ENCODE measurements at regions of chr1 and their contacts with region 1.

Region 1: GRCh38 chr1:75203415-75204277 is 69.5 kb downstream of the LHX8 start:
- DNase-seq: no peak
- ATAC-seq: no peak
- H3K4me3 Mint-ChIP-seq: no peak overlapping the region
- H3K27ac Mint-ChIP-seq: no peak overlapping the region
- H3K4me1 Mint-ChIP-seq: no peaks in the 10 kb centered on the region
- H3K27me3 Mint-ChIP-seq: peaks cover 1% of the 10 kb centered on the region

Region 2: GRCh38 chr1:74771913-74772515 is 431.6 kb before region 1 on chr1:
- CTCF ChIA-PET with region 1: interaction called, 17 read pairs
- POLR2A ChIA-PET with region 1: no interaction called
- intact Hi-C with region 1: loop called (anchors 1 kb)
- DNase-seq: peak; percentile 27
- ATAC-seq: no peak
- H3K4me3 Mint-ChIP-seq: no peak overlapping the region
- H3K27ac Mint-ChIP-seq: no peak overlapping the region
- H3K4me1 Mint-ChIP-seq: no peaks in the 10 kb centered on the region
- H3K27me3 Mint-ChIP-seq: peaks cover 9% of the 10 kb centered on the region

Region 3: GRCh38 chr1:74790453-74790852 is 413.2 kb before region 1 on chr1:
- CTCF ChIA-PET with region 1: no interaction called
- POLR2A ChIA-PET with region 1: no interaction called
- intact Hi-C with region 1: loop called in 1 of 2 experiments (anchors 10 kb)
- DNase-seq: no peak
- ATAC-seq: no peak
- H3K4me3 Mint-ChIP-seq: no peak overlapping the region
- H3K27ac Mint-ChIP-seq: no peak overlapping the region
- H3K4me1 Mint-ChIP-seq: no peaks in the 10 kb centered on the region
- H3K27me3 Mint-ChIP-seq: peaks cover 17% of the 10 kb centered on the region